ENCODE measurements at regions of chr11 and their contacts with region 1.

Region 1: DNA sequence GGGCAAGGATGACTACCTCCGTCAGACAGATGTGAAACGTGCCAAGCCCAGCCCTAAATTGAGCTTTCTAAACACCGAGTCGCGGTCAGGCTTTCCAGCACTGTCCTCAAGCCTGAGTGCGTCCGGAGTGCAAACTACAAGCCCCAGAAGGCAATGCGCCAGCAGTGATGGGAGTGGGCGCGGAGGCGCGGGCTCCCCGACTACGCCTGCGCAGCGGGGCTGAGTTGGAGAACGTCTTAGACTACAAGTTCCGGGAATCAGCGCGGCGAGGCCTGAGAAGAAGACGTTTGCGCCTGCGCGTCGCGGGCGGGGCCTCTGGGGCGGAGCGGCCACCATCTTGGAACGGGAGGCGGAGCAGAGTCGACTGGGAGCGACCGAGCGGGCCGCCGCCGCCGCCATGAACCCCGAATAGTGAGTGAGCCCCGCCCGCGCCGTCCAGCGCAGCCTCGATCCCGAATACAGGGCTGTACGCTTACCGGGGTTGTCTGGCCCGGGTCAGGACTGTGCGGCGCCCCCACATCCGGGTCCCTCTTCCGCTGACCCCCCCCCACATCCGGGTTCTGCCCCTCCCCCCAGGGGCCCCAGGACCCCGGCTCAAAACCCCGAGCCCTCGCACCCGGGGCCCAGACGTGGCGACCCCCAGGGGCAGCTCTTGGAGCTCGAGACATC is at the start of gene RAB1B:
- DNase-seq: peak; percentile 99 to 100 (median 100)
- H3K4me3 ChIP-seq: peak within 1 kb of the TSS; percentile 62 to 84
- H3K4me3 Mint-ChIP-seq: peak within 1 kb of the TSS; percentile 92 to 99 (median 94)
- H3K27ac ChIP-seq: peak within 1 kb of the TSS; percentile 88
- H3K27ac Mint-ChIP-seq: peak within 1 kb of the TSS; percentile 94 to 100 (median 98)
- H3K4me1 ChIP-seq: peaks cover 48% of the 10 kb centered on the region
- H3K4me1 Mint-ChIP-seq: peaks cover 23 to 57% (median 39%) of the 10 kb centered on the region in 4 donors
- H3K27me3 ChIP-seq: no peaks in the 10 kb centered on the region
- H3K27me3 Mint-ChIP-seq: no peaks in the 10 kb centered on the region
- total RNA-seq, gene RAB1B: 76.4 to 79.4 TPM

Region 2: GRCh38 chr11:64916775-64917662 is 1351.4 kb before region 1 on chr11 and contains the start of gene ATG2A:
- CTCF ChIA-PET with region 1: no interaction called
- POLR2A ChIA-PET with region 1: no interaction called
- intact Hi-C with region 1: loop called (anchors 5 kb)
- DNase-seq: peak; percentile 98 to 99 (median 99)
- H3K4me3 ChIP-seq: peak within 1 kb of the TSS; percentile 94 to 97
- H3K4me3 Mint-ChIP-seq: peak within 1 kb of the TSS; percentile 91 to 96 (median 93)
- H3K27ac ChIP-seq: peak within 1 kb of the TSS; percentile 88
- H3K27ac Mint-ChIP-seq: peak within 1 kb of the TSS; percentile 93 to 97 (median 96)
- H3K4me1 ChIP-seq: peaks cover 27% of the 10 kb centered on the region
- H3K4me1 Mint-ChIP-seq: peaks cover 15 to 28% (median 23%) of the 10 kb centered on the region in 4 donors
- H3K27me3 ChIP-seq: no peaks in the 10 kb centered on the region
- H3K27me3 Mint-ChIP-seq: no peaks in the 10 kb centered on the region
- total RNA-seq, gene ATG2A: 45.7 to 47.3 TPM

Region 3: GRCh38 chr11:66251809-66252208 is 16.6 kb before region 1 on chr11:
- CTCF ChIA-PET with region 1: interaction called, 3 read pairs
- POLR2A ChIA-PET with region 1: interaction called, 14 read pairs
- intact Hi-C with region 1: no loop called
- DNase-seq: no peak
- H3K4me3 ChIP-seq: no peak overlapping the region
- H3K4me3 Mint-ChIP-seq: peak overlapping the region in 1 of 8 donors; percentile 39
- H3K27ac ChIP-seq: no peak overlapping the region
- H3K27ac Mint-ChIP-seq: peak overlapping the region in 4 of 7 donors; percentile 29 to 58 (median 46)
- H3K4me1 ChIP-seq: peaks cover 10% of the 10 kb centered on the region
- H3K4me1 Mint-ChIP-seq: peaks cover 10 to 31% (median 20%) of the 10 kb centered on the region in 4 donors
- H3K27me3 ChIP-seq: no peaks in the 10 kb centered on the region
- H3K27me3 Mint-ChIP-seq: no peaks in the 10 kb centered on the region

Region 4: DNA sequence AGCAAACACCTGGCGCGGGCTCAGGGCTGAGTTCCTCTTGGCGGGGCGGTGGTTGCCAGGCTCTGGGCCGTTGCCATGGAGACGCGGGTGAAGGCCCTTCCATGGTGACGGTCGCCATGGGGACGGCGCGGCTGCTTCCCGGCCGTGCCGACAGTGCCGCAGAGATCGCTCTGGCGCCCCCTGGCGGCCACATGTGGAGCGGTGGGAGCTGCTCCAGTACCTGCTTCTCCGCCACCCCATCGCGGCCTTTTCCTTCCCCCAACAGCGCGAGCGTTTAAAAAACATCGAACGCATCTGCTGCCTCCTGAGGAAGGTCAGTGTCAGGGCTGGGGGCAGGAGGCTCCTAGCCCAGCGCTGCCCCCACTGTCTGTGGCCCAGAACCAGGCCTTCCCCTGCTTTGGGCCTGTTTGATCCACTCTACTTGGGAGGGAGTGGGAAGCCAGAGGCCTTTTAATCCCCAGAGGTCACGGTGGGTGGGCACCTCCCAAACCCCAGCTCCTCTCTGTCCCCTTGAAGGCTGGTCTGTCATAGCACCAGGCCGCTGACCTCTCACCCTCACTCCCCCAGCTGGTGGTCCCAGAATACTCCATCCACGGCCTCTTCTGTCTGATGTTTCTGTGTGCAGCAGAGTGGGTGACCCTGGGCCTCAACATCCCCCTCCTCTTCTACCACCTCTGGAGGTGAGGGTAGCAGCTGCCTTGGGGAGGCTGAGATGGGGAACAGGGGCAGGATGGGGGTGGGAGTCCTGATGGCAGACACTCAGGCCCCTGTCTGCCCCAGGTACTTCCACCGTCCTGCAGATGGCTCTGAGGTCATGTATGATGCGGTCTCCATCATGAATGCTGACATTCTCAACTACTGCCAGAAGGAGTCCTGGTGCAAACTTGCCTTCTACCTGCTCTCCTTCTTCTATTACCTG is 14.3 kb after region 1 on chr11:
- CTCF ChIA-PET with region 1: interaction called, 15 read pairs
- POLR2A ChIA-PET with region 1: interaction called, 167 read pairs
- intact Hi-C with region 1: loop called (anchors 1 kb)
- DNase-seq: peak; percentile 98 to 99 (median 99)
- H3K4me3 ChIP-seq: no peak overlapping the region
- H3K4me3 Mint-ChIP-seq: peak overlapping the region; percentile 11 to 81 (median 55)
- H3K27ac ChIP-seq: peak overlapping the region; percentile 62
- H3K27ac Mint-ChIP-seq: peak overlapping the region; percentile 86 to 96 (median 92)
- H3K4me1 ChIP-seq: peaks cover 30% of the 10 kb centered on the region
- H3K4me1 Mint-ChIP-seq: peaks cover 10 to 46% (median 29%) of the 10 kb centered on the region in 4 donors
- H3K27me3 ChIP-seq: no peaks in the 10 kb centered on the region
- H3K27me3 Mint-ChIP-seq: peaks cover 0 to 1% of the 10 kb centered on the region in 2 donors

Measured in CD4-positive, alpha-beta memory T cell (primary cell).